ENCODE measurements at regions of chr1 and their contacts with region 1.

Region 1: DNA sequence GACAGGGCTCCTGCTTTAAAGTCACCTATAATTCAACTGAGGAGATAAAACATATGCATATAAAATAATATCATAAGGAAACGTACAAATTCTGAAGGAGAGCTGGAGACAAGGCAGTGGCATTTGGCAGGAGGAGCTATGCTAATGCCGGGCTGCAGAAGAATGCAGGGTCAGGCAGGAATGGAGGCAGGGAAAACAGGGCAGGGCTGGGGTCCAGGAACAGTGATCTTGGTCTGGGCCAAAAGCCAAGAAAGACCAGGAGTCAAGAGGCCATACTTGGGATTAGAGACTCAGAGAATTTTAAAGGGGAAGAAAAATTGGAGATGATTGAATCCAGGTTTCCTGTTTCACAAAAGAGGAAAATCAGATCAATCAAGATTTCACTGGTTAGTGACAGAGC is 20.0 kb upstream of the BRDT start:
- DNase-seq: no peak
- H3K4me3 ChIP-seq: no peak overlapping the region
- H3K27me3 ChIP-seq: no peaks in the 10 kb centered on the region
- CTCF ChIP-seq: no peak

Region 2: GRCh38 chr1:91500756-91501522 is 428.3 kb before region 1 on chr1 and contains the start of gene CDC7:
- CTCF ChIA-PET with region 1: interaction called, 25 read pairs
- POLR2A ChIA-PET with region 1: no interaction called
- DNase-seq: peak; percentile 53
- H3K4me3 ChIP-seq: peak within 1 kb of the TSS; percentile 60
- H3K27me3 ChIP-seq: no peaks in the 10 kb centered on the region
- CTCF ChIP-seq: peak; percentile 39; the same call in 1 of the 2 replicates
- polyA plus RNA-seq, gene CDC7: 2.6 and 2.8 TPM in 2 replicates

Measured in BJ (cell line).